Posterior vena cava (tissue), 2 donors: ENCODE measurements at regions of chr6 and their contacts with region 1.

Region 1: GRCh38 chr6:36546920-36547645 is at the start of gene STK38:
- DNase-seq: peak; percentile 98
- total RNA-seq, gene STK38: 32.1 to 32.7 TPM

Region 2: GRCh38 chr6:36594816-36595643 is 47.9 kb after region 1 on chr6:
- intact Hi-C with region 1: loop called in 1 of 2 experiments (anchors 5 kb)
- DNase-seq: no peak